ENCODE measurements at regions of chr7 and their contacts with region 1.

Region 1: GRCh38 chr7:127270093-127270492 is 17.4 kb upstream of the GRM8 start:
- DNase-seq: no peak
- H3K4me3 ChIP-seq: no peak overlapping the region
- H3K27me3 ChIP-seq: no peaks in the 10 kb centered on the region
- CTCF ChIP-seq: no peak

Region 2: DNA sequence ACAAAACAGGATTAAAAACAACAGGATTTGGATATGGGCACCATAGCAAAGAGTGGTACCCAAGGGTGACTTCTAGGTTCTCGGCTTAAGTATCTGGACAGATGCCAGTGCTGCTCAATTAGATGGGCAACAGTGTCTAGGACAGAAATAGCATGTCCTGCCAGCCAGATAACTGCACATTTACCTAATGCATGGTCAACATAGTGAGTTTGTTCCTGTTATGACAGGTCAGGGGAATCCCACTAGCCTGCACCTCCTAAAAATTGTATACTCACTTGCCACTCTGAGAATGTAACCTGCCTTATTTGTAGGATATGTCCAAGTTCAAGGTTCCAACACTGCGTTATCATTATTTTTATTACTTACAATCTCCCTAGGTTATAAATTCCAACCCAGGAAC is 489.1 kb before region 1 on chr7:
- CTCF ChIA-PET with region 1: no interaction called
- POLR2A ChIA-PET with region 1: no interaction called
- DNase-seq: no peak
- H3K4me3 ChIP-seq: no peak overlapping the region
- H3K27me3 ChIP-seq: no peaks in the 10 kb centered on the region
- CTCF ChIP-seq: no peak

Region 3: DNA sequence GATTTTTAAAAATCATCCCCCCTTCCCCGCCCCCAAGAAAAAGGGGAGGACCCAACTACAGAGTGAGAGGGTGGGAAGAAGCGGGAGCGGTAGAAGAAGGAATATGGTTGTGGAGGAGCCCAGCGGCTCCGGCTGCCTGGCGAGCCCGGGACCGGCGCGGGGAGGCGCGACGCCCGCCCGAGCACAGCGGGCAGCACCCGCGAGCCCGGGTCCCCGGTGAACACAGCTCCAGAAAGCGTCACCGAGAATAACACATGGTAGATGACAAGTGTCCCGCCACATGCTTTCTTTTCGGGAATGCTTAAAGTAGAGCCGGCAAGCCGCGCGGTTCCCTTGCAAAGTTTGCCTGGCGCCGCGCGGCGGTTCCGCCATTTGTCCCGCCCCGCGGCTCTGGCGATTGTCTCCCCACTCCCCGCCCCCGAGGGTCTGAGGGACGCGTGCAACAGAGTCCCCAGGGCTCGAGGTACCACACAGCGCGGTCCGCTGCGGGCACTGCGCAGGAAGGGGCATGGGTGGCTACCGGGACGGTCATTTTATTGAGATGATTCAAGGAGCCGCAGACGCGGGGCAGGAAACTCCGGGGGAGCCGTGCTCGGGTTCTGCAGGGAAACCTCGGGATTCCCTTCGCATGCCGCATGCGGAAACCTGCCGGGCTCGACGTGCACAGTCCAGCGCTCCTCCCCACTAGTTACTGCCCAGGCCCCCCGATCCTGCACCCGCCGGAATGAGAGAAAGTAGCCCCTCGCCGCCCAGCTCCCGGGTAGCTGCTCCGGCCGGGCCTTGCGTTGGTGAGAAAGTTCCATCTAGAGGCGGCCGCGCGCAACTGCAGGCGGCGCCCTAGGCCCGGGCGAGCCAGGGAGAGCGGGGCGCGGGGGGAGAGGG is 16.6 kb before region 1 on chr7:
- CTCF ChIA-PET with region 1: interaction called, 15 read pairs
- POLR2A ChIA-PET with region 1: no interaction called
- DNase-seq: no peak
- H3K4me3 ChIP-seq: peak overlapping the region; percentile 61
- H3K27me3 ChIP-seq: peaks cover 41% of the 10 kb centered on the region
- CTCF ChIP-seq: peak; percentile 92